ENCODE measurements at regions of chr6 and their contacts with region 1.

Region 1: GRCh38 chr6:78867370-78868040 is at the start of gene IRAK1BP1:
- DNase-seq: peak; percentile 90
- H3K4me3 ChIP-seq: peak within 1 kb of the TSS; percentile 95
- H3K27ac ChIP-seq: peak within 1 kb of the TSS; percentile 65
- H3K4me1 ChIP-seq: no peaks in the 10 kb centered on the region
- H3K27me3 ChIP-seq: no peaks in the 10 kb centered on the region
- CTCF ChIP-seq: peak; percentile 23; the same call in 1 of the 2 replicates
- total RNA-seq, gene IRAK1BP1: 6.2 and 6.6 TPM in 2 replicates

Region 2: GRCh38 chr6:79188885-79189480 is 321.5 kb after region 1 on chr6:
- CTCF ChIA-PET with region 1: no interaction called
- POLR2A ChIA-PET with region 1: no interaction called
- intact Hi-C with region 1: no loop called
- DNase-seq: no peak
- H3K4me3 ChIP-seq: no peak overlapping the region
- H3K27ac ChIP-seq: no peak overlapping the region
- H3K4me1 ChIP-seq: no peaks in the 10 kb centered on the region
- H3K27me3 ChIP-seq: no peaks in the 10 kb centered on the region
- CTCF ChIP-seq: no peak

Region 3: GRCh38 chr6:79869600-79870084 is 1002.1 kb after region 1 on chr6:
- CTCF ChIA-PET with region 1: no interaction called
- POLR2A ChIA-PET with region 1: no interaction called
- intact Hi-C with region 1: loop called (anchors 10 kb)
- DNase-seq: peak; percentile 74
- H3K4me3 ChIP-seq: peak overlapping the region; percentile 14
- H3K27ac ChIP-seq: no peak overlapping the region
- H3K4me1 ChIP-seq: no peaks in the 10 kb centered on the region
- H3K27me3 ChIP-seq: no peaks in the 10 kb centered on the region
- CTCF ChIP-seq: peak; percentile 94